ENCODE measurements at regions of chr2 and their contacts with region 1.

Region 1: DNA sequence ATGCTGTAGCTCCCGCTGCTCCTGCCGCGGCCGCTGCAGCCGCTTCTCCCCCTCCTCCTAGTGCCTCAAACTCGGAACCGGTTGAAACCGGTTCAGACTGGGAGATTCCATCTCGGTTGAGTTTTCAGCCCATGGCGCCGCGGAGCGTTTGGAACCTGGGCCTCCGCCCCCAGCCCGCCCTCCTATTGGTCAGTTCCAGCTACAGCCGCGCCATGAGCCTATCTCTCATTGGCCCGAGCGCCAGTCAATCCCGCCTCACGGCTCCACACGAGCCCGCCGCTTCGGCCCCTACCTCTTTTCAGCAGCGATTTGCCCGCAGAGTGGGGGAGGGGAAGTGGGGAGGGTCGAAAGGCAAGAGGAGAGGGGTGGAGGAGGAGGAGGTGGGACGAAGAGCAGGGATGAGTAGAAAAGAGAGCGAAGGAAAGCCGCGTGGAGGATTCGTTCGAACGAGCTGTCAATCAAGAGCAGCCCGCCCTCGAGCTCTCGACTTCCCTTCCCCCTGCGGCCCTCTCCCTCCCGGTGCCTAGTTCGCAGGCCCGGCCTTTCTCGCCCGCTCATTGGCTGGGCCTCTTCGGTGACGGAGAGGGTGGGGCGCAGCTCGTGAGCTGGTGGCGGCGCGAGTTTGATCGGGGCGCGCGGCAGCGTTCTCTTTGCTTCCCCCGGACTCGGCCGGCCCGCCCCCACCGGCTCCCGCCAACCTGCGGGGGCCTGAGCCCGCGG is at the start of gene XPO1:
- DNase-seq: peak; percentile 99
- H3K4me3 ChIP-seq: peak within 1 kb of the TSS; percentile 88 to 99 (median 90)
- H3K27ac ChIP-seq: peak within 1 kb of the TSS; percentile 81
- H3K4me1 ChIP-seq: peaks cover 29% of the 10 kb centered on the region
- H3K27me3 ChIP-seq: no peaks in the 10 kb centered on the region
- CTCF ChIP-seq: no peak
- POLR2A ChIP-seq: peak; percentile 96
- total RNA-seq, gene XPO1: 148 and 166 TPM in 2 replicates

Region 2: DNA sequence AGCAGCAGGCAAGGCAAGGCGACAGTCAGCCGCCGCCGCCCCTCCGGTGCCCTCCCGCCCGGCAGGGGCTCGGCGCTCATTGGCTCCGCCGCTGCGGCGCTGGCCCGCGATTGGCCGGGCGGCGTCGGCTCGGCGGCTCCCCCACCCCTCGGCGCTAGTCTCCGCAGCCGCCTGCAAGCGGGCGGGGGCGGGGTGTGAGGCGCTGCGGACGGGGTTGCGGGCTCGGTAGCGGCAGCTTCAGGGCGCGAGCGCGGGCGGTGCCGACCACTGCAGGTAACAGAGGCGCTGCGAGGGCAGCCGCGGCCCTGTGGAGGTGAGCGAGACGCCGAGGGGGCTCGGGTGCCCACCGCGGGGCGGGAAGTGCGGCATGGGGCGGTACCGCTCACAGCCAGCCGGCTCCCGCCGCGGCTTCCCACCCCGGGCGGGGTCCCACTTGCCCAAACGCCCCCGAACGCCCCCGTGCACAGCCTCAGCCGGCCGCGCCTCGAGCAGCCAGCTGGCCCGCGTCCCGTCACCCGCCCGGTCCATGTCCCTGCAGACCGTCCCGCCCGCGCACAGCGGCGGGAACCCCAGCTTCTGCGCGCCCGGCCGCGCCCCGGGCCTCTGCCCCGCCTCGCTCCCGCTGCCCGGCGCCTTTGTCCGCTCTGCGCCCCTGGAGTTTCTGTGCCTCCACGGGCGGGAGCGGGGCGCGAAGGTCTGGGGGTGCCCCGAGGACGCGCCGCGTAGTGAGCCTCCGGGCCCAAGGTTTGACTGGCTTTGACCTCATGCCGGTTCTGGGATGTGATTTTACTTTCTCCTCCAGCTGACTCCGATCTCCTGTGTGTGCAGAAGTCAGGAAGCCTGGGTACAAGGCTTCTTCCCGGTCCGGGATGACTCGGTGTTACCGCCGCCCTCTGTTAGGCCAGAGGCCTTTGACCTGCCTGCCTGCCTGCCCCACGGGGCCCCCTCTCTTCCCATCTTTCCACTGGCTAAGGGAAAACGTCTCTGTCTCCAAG is 472.3 kb before region 1 on chr2 and contains the start of gene SANBR:
- CTCF ChIA-PET with region 1: no interaction called
- POLR2A ChIA-PET with region 1: no interaction called
- dilution Hi-C with region 1: no loop called
- intact Hi-C with region 1: loop called (anchors 2 kb)
- DNase-seq: peak; percentile 87
- H3K4me3 ChIP-seq: peak within 1 kb of the TSS; percentile 82 to 99 (median 93)
- H3K27ac ChIP-seq: peak within 1 kb of the TSS; percentile 55
- H3K4me1 ChIP-seq: peaks cover 9% of the 10 kb centered on the region
- H3K27me3 ChIP-seq: no peaks in the 10 kb centered on the region
- CTCF ChIP-seq: no peak
- POLR2A ChIP-seq: peak; percentile 68
- total RNA-seq, gene SANBR: 22.9 and 23.8 TPM in 2 replicates

Region 3: GRCh38 chr2:61443342-61444041 is 94.9 kb before region 1 on chr2:
- CTCF ChIA-PET with region 1: no interaction called
- POLR2A ChIA-PET with region 1: no interaction called
- dilution Hi-C with region 1: no loop called
- intact Hi-C with region 1: no loop called
- DNase-seq: no peak
- H3K4me3 ChIP-seq: no peak overlapping the region
- H3K27ac ChIP-seq: no peak overlapping the region
- H3K4me1 ChIP-seq: no peaks in the 10 kb centered on the region
- H3K27me3 ChIP-seq: no peaks in the 10 kb centered on the region
- CTCF ChIP-seq: no peak
- POLR2A ChIP-seq: no peak

Region 4: GRCh38 chr2:61470965-61471904 is 67.1 kb before region 1 on chr2 and contains the start of gene USP34:
- CTCF ChIA-PET with region 1: no interaction called
- POLR2A ChIA-PET with region 1: no interaction called
- dilution Hi-C with region 1: no loop called
- intact Hi-C with region 1: loop called (anchors 1 kb)
- DNase-seq: peak; percentile 96
- H3K4me3 ChIP-seq: peak within 1 kb of the TSS; percentile 73 to 98 (median 94)
- H3K27ac ChIP-seq: peak within 1 kb of the TSS; percentile 96
- H3K4me1 ChIP-seq: peaks cover 12% of the 10 kb centered on the region
- H3K27me3 ChIP-seq: no peaks in the 10 kb centered on the region
- CTCF ChIP-seq: no peak
- POLR2A ChIP-seq: peak; percentile 89
- total RNA-seq, gene USP34: 96.9 and 98.3 TPM in 2 replicates

Region 5: GRCh38 chr2:61633250-61633649 is 94.9 kb after region 1 on chr2:
- CTCF ChIA-PET with region 1: interaction called, 4 read pairs
- POLR2A ChIA-PET with region 1: no interaction called
- dilution Hi-C with region 1: no loop called
- intact Hi-C with region 1: loop called (anchors 5 kb)
- DNase-seq: peak; percentile 18
- H3K4me3 ChIP-seq: no peak overlapping the region
- H3K27ac ChIP-seq: no peak overlapping the region
- H3K4me1 ChIP-seq: peaks cover 4% of the 10 kb centered on the region
- H3K27me3 ChIP-seq: peaks cover 0 to 3% of the 10 kb centered on the region in 2 experiments
- CTCF ChIP-seq: no peak
- POLR2A ChIP-seq: no peak

Region 6: GRCh38 chr2:61764035-61764800 is 225.9 kb after region 1 on chr2:
- CTCF ChIA-PET with region 1: no interaction called
- POLR2A ChIA-PET with region 1: no interaction called
- dilution Hi-C with region 1: no loop called
- intact Hi-C with region 1: loop called (anchors 1 kb)
- DNase-seq: peak; percentile 99
- H3K4me3 ChIP-seq: peak overlapping the region; percentile 45 to 84 (median 53)
- H3K27ac ChIP-seq: peak overlapping the region; percentile 99
- H3K4me1 ChIP-seq: peaks cover 9% of the 10 kb centered on the region
- H3K27me3 ChIP-seq: peaks cover 0 to 2% of the 10 kb centered on the region in 2 experiments
- CTCF ChIP-seq: peak in 1 of 2 donors; percentile 1
- POLR2A ChIP-seq: peak; percentile 61

Region 7: DNA sequence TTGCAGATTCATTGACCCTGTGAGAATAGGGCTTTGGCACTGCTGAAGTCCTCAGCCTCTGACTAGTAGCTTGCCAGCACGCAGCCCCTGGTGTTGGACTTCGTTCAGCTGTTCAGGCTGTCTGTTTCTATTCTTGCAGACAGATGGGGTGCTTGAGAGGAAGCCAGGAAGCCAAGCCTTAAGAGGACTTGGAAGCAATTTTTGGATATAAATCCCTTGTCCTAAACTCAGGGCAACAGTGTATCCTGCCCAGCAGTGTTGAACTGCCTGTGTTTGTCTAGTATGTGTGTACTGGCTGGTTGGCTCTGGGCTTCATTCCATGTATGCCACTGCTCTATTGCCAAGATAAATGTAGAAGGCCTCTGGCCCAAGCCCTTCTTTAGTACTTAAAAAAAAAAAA is 475.7 kb after region 1 on chr2:
- CTCF ChIA-PET with region 1: no interaction called
- POLR2A ChIA-PET with region 1: no interaction called
- dilution Hi-C with region 1: no loop called
- intact Hi-C with region 1: no loop called
- DNase-seq: peak; percentile 89
- H3K4me3 ChIP-seq: no peak overlapping the region
- H3K27ac ChIP-seq: no peak overlapping the region
- H3K4me1 ChIP-seq: no peaks in the 10 kb centered on the region
- H3K27me3 ChIP-seq: no peaks in the 10 kb centered on the region
- CTCF ChIP-seq: peak in 1 of 2 donors; percentile 4
- POLR2A ChIP-seq: no peak